ENCODE measurements at regions of chr19 and their contacts with region 1.

Region 1: GRCh38 chr19:7762719-7763293 is at the start of gene CLEC4M:
- DNase-seq: peak in 1 of 2 donors; percentile 10
- H3K4me3 ChIP-seq: no peak within 1 kb of the TSS
- H3K27ac ChIP-seq: no peak within 1 kb of the TSS
- H3K4me1 ChIP-seq: no peaks in the 10 kb centered on the region
- H3K27me3 ChIP-seq: peaks cover 0 to 22% of the 10 kb centered on the region in 2 donors
- CTCF ChIP-seq: no peak

Region 2: DNA sequence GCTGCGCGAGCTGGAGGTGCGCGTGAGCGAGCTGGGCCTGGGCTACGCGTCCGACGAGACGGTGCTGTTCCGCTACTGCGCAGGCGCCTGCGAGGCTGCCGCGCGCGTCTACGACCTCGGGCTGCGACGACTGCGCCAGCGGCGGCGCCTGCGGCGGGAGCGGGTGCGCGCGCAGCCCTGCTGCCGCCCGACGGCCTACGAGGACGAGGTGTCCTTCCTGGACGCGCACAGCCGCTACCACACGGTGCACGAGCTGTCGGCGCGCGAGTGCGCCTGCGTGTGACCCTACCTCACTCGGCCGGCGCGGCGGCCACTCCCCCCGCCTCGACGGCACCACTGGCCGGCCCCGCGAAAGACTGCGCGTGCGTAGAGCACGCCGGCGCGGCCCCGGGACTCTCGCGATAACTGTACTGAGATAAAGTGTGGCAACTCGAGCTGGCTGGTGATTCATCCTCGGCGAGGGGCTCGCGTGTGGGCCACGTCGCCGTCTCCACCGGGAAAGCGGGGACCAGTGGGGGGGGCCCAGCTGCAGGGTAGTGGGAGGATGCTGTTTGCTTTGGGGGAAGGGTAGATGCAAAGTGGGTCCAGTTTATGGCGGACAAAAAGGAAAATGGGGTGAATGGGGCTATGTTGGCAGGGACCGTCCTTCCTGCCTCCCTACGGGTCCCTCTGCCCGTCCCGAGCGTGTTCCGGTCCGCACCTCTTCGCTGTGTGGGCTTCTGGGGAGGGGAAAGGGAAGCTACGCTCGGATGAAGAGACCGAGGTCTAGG is 1934.7 kb before region 1 on chr19:
- intact Hi-C with region 1: loop called (anchors 5 kb)
- DNase-seq: peak; percentile 70 to 84
- H3K4me3 ChIP-seq: peak overlapping the region; percentile 36 to 46
- H3K27ac ChIP-seq: no peak overlapping the region
- H3K4me1 ChIP-seq: peaks cover 0 to 24% (median 16%) of the 10 kb centered on the region in 4 donors
- H3K27me3 ChIP-seq: peaks cover 3 to 81% of the 10 kb centered on the region in 2 donors
- CTCF ChIP-seq: no peak

Region 3: GRCh38 chr19:7815325-7815724 is 52.5 kb after region 1 on chr19:
- intact Hi-C with region 1: no loop called
- DNase-seq: no peak
- H3K4me3 ChIP-seq: no peak overlapping the region
- H3K27ac ChIP-seq: no peak overlapping the region
- H3K4me1 ChIP-seq: no peaks in the 10 kb centered on the region
- H3K27me3 ChIP-seq: peaks cover 0 to 29% of the 10 kb centered on the region in 2 donors
- CTCF ChIP-seq: no peak